MCF 10A (cell line): ENCODE measurements at regions of chr9 and their contacts with region 1.

Region 1: GRCh38 chr9:15135164-15135792 is 171.7 kb downstream of the TTC39B start:
- DNase-seq: peak; percentile 82
- H3K4me3 Mint-ChIP-seq: peak overlapping the region; percentile 11
- H3K27ac Mint-ChIP-seq: no peak overlapping the region
- H3K4me1 Mint-ChIP-seq: peaks cover 6% of the 10 kb centered on the region
- H3K27me3 Mint-ChIP-seq: no peaks in the 10 kb centered on the region
- CTCF ChIP-seq: peak; percentile 82

Region 2: DNA sequence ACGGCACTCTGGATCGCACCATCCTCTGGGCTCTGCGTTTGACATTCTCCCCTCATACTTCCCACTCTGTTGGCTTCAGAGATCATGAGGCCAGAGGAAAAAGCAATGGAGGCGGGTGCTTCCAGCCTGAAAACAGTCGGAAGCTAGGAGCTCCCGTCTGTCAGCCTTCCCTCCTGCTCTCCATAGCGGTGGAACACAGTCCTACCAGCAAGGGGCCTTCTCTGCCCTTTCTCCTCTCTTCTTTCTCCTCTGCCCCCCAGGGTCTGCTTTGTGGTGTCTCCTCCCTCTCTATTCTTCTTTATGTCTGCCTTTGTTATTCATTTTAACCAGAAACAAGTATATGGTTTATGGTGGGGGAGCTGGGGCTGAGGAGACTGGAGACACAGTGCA is 668.9 kb before region 1 on chr9:
- CTCF ChIA-PET with region 1: no interaction called
- POLR2A ChIA-PET with region 1: no interaction called
- intact Hi-C with region 1: loop called (anchors 10 kb)
- DNase-seq: no peak
- H3K4me3 Mint-ChIP-seq: no peak overlapping the region
- H3K27ac Mint-ChIP-seq: no peak overlapping the region
- H3K4me1 Mint-ChIP-seq: no peaks in the 10 kb centered on the region
- H3K27me3 Mint-ChIP-seq: peaks cover 47% of the 10 kb centered on the region
- CTCF ChIP-seq: no peak

Region 3: DNA sequence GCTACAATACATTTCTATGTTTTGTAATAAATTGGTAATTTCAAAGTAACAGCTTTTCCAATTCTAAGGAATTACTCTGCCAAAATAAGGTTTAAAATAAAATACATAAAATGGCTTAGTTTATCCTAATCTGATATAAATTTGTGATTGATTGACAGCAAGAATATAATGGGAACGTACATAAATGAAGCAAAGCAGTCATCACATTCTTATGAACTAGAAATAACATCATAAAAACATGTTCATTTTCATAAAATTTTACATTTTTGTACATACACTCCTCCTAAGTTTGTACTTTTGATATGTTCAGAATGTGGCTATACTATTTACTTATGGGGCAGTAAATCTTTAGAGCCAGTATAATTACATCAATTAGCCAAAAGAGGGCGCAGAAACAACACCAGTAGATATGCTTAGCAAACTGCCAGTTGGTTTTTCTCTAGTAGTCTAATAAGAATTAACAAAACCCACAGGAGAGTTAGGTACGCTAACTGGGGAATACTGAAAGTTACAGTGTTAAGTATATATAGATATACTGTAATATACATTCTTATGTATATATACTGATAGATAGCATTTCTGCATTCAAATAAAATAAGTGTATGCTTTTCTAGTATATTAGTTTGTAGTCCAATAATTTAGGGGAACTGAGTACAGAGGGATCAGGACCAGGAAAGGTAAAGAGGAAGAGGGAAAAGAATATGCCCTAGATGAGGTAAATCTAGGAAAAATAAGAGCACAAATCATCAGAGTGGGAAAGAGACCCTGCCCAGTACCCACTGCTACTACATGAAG is 518.9 kb before region 1 on chr9:
- CTCF ChIA-PET with region 1: interaction called, 14 read pairs
- POLR2A ChIA-PET with region 1: no interaction called
- intact Hi-C with region 1: loop called (anchors 5 kb)
- DNase-seq: peak; percentile 65
- H3K4me3 Mint-ChIP-seq: no peak overlapping the region
- H3K27ac Mint-ChIP-seq: no peak overlapping the region
- H3K4me1 Mint-ChIP-seq: no peaks in the 10 kb centered on the region
- H3K27me3 Mint-ChIP-seq: no peaks in the 10 kb centered on the region
- CTCF ChIP-seq: peak; percentile 66

Region 4: GRCh38 chr9:14846871-14847311 is 288.4 kb before region 1 on chr9:
- CTCF ChIA-PET with region 1: interaction called, 6 read pairs
- POLR2A ChIA-PET with region 1: no interaction called
- intact Hi-C with region 1: loop called (anchors 2 kb)
- DNase-seq: peak; percentile 66
- H3K4me3 Mint-ChIP-seq: no peak overlapping the region
- H3K27ac Mint-ChIP-seq: no peak overlapping the region
- H3K4me1 Mint-ChIP-seq: peaks cover 4% of the 10 kb centered on the region
- H3K27me3 Mint-ChIP-seq: peaks cover 62% of the 10 kb centered on the region
- CTCF ChIP-seq: peak; percentile 74

Region 5: DNA sequence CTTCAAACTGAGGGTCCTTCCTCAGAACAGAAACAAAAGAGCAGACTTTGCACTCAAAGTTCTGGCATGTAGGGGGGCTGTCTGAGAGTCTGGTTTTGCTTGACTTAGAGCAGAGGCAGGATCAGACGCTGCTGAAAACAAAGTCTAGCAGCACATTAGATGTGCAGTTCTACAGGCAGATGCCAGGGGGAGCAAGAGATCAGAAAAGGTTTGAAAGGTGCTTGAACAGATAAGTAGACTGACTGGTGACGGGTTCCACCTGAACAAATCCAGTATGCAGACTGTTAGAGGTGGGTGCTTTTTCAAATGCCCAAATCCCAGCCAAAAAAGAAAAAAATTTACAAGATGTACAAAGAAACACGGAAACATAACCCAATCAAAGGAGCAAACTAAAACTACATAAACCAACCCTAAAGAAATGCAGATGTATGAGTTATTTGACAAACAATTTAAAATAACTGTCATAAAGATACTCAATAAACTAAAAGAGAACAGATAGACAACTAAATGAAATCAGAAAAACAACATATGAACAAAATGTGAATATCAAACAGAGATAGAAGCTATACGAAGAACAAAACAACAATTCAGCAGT is 30.4 kb before region 1 on chr9:
- CTCF ChIA-PET with region 1: interaction called, 42 read pairs
- POLR2A ChIA-PET with region 1: interaction called, 3 read pairs
- intact Hi-C with region 1: loop called (anchors 1 kb)
- DNase-seq: peak; percentile 57
- H3K4me3 Mint-ChIP-seq: no peak overlapping the region
- H3K27ac Mint-ChIP-seq: no peak overlapping the region
- H3K4me1 Mint-ChIP-seq: peaks cover 6% of the 10 kb centered on the region
- H3K27me3 Mint-ChIP-seq: peaks cover 43% of the 10 kb centered on the region
- CTCF ChIP-seq: peak; percentile 82

Region 6: DNA sequence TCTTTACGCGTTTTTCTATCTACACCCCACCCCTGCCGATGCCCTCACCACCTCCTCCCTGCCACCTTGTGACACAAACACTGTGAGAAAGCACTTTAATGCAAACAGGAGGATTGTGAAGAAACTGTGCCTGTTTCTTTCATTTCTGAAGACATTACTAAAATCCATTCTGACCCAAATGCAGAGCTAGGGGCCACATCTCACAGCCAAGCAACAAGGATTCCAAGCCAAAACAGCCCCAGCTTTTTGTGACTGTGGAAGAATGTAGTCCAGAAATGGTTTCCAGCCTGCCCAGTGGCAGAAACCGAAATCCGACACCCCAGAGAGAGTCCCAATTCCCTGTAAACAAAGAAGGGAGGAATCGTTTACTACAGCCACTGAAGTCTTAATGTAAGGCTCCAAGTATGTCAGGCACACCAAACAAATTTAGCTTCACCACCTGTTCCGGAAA is 19.1 kb before region 1 on chr9:
- CTCF ChIA-PET with region 1: interaction called, 17 read pairs
- POLR2A ChIA-PET with region 1: interaction called, 3 read pairs
- intact Hi-C with region 1: no loop called
- DNase-seq: no peak
- H3K4me3 Mint-ChIP-seq: no peak overlapping the region
- H3K27ac Mint-ChIP-seq: no peak overlapping the region
- H3K4me1 Mint-ChIP-seq: no peaks in the 10 kb centered on the region
- H3K27me3 Mint-ChIP-seq: peaks cover 67% of the 10 kb centered on the region
- CTCF ChIP-seq: no peak

Region 7: GRCh38 chr9:15191378-15191777 is 56.1 kb after region 1 on chr9:
- CTCF ChIA-PET with region 1: no interaction called
- POLR2A ChIA-PET with region 1: no interaction called
- intact Hi-C with region 1: no loop called
- DNase-seq: no peak
- H3K4me3 Mint-ChIP-seq: no peak overlapping the region
- H3K27ac Mint-ChIP-seq: no peak overlapping the region
- H3K4me1 Mint-ChIP-seq: no peaks in the 10 kb centered on the region
- H3K27me3 Mint-ChIP-seq: no peaks in the 10 kb centered on the region
- CTCF ChIP-seq: no peak

Region 8: GRCh38 chr9:15333376-15333881 is 198.2 kb after region 1 on chr9:
- CTCF ChIA-PET with region 1: no interaction called
- POLR2A ChIA-PET with region 1: no interaction called
- intact Hi-C with region 1: no loop called
- DNase-seq: no peak
- H3K4me3 Mint-ChIP-seq: no peak overlapping the region
- H3K27ac Mint-ChIP-seq: no peak overlapping the region
- H3K4me1 Mint-ChIP-seq: no peaks in the 10 kb centered on the region
- H3K27me3 Mint-ChIP-seq: peaks cover 33% of the 10 kb centered on the region
- CTCF ChIP-seq: no peak